H1 (cell line): ENCODE measurements at regions of chr7 and their contacts with region 1.

Region 1: DNA sequence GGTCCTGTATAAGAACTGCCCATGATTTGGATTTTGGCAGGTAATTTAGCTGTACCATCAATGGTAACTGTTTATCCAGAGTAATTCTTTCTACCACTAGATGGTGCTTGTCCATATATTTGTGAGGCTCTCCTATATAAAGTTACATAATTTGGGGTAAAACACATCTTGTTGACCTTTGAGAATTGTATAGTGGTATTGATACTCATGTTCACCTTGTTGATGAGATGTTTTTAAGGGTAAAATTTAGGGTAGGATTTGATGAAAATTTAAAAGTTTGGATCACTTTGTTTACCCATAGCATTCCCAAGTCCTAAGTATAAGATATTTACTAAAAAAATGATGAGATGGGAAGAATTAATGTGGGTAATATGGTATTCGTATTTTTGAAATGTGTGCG is 31.6 kb downstream of the ST7 start:
- DNase-seq: no peak
- H3K4me3 ChIP-seq: no peak overlapping the region
- H3K27ac ChIP-seq: no peak overlapping the region
- H3K4me1 ChIP-seq: no peaks in the 10 kb centered on the region; a peak in 1 of 7 replicates
- H3K27me3 ChIP-seq: no peaks in the 10 kb centered on the region
- CTCF ChIP-seq: peak in 2 of 3 experiments; percentile 36 to 50; a peak in 2 of 4 replicates
- EP300 ChIP-seq: no peak
- POLR2A ChIP-seq: no peak
- RAD21 ChIP-seq: peak; percentile 44 to 54

Region 2: DNA sequence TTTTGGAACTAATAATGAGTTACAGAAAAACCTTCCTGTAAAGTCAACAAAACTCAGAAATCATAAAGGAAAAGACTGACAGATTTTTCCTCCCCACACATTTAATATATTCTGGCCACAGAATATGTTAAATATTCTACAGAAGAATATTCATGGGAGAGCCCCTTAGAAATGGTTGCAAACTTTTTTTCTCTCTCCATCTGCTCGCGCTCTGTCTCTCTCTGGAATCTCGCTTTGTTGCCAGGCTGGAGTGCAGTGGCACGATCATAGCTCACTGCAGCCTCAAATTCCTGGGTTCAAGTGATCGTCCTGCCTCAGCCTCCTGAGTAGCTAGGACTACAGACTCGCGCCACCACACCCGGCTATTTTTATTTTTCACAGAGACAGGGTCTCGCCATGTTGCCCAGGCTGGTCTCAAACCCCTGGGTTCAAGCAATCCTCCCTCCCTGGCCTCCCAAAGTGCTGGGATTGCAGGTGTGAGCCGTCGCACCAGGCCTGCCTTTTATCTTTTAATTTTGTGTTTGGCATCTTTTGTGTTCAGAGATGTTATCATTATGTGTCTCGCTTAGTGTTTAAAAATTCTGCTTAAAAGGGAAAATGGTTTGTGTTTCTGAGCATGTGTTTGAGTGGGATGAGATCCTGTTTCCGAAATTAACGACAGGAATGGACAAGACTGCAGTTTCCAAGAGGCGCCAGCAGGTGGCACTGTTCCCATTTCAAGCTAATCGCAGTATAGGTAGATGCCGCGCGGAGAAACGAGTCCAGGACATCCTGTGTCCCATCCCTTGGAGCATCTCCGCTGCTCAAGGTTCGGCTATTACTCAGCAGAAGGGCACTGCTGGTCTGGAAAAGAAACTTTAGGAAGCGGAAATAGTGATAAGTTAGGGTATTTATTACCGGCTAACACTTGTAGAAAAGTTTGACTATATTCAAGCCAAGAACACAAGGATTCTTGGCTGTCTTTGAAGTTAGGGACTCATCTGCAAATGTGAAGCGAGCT is 54.7 kb before region 1 on chr7:
- CTCF ChIA-PET with region 1: interaction called, 14 read pairs
- POLR2A ChIA-PET with region 1: no interaction called
- DNase-seq: peak; percentile 68 to 92
- H3K4me3 ChIP-seq: no peak overlapping the region
- H3K27ac ChIP-seq: no peak overlapping the region
- H3K4me1 ChIP-seq: no peaks in the 10 kb centered on the region
- H3K27me3 ChIP-seq: no peaks in the 10 kb centered on the region
- CTCF ChIP-seq: peak; percentile 73 to 96 (median 89)
- EP300 ChIP-seq: no peak
- POLR2A ChIP-seq: no peak
- RAD21 ChIP-seq: peak; percentile 95 to 98

Region 3: GRCh38 chr7:116999311-116999710 is 14.4 kb after region 1 on chr7:
- CTCF ChIA-PET with region 1: interaction called, 27 read pairs
- POLR2A ChIA-PET with region 1: no interaction called
- DNase-seq: no peak
- H3K4me3 ChIP-seq: no peak overlapping the region
- H3K27ac ChIP-seq: no peak overlapping the region
- H3K4me1 ChIP-seq: no peaks in the 10 kb centered on the region; a peak in 1 of 7 replicates
- H3K27me3 ChIP-seq: no peaks in the 10 kb centered on the region
- CTCF ChIP-seq: no peak
- EP300 ChIP-seq: no peak
- POLR2A ChIP-seq: no peak
- RAD21 ChIP-seq: no peak

Region 4: DNA sequence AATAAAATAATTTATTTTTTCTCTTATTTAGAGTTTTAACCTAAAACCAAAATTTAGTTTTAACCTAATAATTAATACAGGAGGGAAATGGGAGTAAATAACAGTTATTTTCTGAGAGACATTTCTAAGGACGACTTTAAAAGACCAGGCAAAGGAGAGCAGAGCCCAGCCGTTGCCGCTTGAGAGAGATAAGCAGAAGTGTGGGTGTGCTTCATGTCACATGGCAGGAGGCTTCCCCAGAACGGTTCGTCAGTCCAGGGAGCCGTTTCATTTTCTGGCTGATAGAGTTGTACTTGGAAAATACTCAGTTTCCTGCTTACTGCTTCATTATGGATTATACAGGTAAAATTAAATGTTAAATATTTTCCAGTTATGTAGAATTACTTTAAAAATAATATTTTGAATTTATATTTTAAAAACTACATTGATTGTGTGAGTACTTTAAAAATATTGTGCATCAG is 29.8 kb after region 1 on chr7:
- CTCF ChIA-PET with region 1: interaction called, 32 read pairs
- POLR2A ChIA-PET with region 1: no interaction called
- DNase-seq: no peak
- H3K4me3 ChIP-seq: no peak overlapping the region
- H3K27ac ChIP-seq: no peak overlapping the region
- H3K4me1 ChIP-seq: no peaks in the 10 kb centered on the region; a peak in 2 of 7 replicates
- H3K27me3 ChIP-seq: no peaks in the 10 kb centered on the region
- CTCF ChIP-seq: no peak
- EP300 ChIP-seq: no peak
- POLR2A ChIP-seq: no peak
- RAD21 ChIP-seq: no peak

Region 5: GRCh38 chr7:117127585-117128168 is 142.8 kb after region 1 on chr7:
- CTCF ChIA-PET with region 1: interaction called, 30 read pairs
- POLR2A ChIA-PET with region 1: no interaction called
- DNase-seq: no peak
- H3K4me3 ChIP-seq: no peak overlapping the region
- H3K27ac ChIP-seq: no peak overlapping the region
- H3K4me1 ChIP-seq: peaks cover 0 to 5% (median 3%) of the 10 kb centered on the region in 4 experiments; a peak in 4 of 7 replicates
- H3K27me3 ChIP-seq: no peaks in the 10 kb centered on the region
- CTCF ChIP-seq: peak in 2 of 3 experiments; percentile 37 to 62; a peak in 2 of 4 replicates
- EP300 ChIP-seq: no peak
- POLR2A ChIP-seq: no peak
- RAD21 ChIP-seq: peak; percentile 43 to 45